Naive thymus-derived CD4-positive, alpha-beta T cell (primary cell): ENCODE measurements at regions of chr7 and their contacts with region 1.

Region 1: DNA sequence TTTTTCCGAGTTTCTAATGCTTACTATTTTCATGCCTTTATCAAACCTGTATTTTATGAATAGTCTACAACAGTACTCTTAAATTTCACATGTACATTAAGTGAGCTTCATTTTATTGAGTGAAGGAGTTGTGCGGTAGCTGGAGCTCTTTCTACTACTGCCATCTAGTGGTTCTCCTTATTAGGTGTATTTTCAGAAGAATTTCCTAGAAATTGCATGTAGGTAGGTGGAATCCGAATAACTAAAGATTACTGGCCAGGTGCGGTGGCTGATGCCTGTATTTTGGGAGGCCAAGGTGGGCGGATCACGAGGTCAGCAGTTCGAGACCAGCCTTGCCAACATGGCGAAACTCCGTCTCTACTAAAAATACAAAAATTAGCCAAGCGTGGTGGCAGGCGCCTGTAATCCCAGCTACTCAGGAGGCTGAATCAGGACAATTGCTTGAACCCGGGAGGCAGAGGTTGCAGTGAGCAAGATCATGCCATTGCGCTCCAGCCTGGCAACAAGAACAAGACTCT is 38.3 kb downstream of the LRRC72 start:
- DNase-seq: peak in 6 of 9 donors; percentile 24 to 59 (median 52)
- ATAC-seq: peak; percentile 73
- H3K4me3 ChIP-seq: no peak overlapping the region
- H3K4me3 Mint-ChIP-seq: peak overlapping the region in 8 of 10 donors; percentile 8 to 95 (median 48)
- H3K27ac ChIP-seq: no peak overlapping the region
- H3K27ac Mint-ChIP-seq: peak overlapping the region in 3 of 9 donors; percentile 17 to 93 (median 41)
- H3K4me1 ChIP-seq: peaks cover 0 to 5% of the 10 kb centered on the region in 2 donors
- H3K4me1 Mint-ChIP-seq: peaks cover 4 to 31% (median 23%) of the 10 kb centered on the region in 7 donors
- H3K27me3 ChIP-seq: no peaks in the 10 kb centered on the region
- H3K27me3 Mint-ChIP-seq: peaks cover 0 to 7% (median 4%) of the 10 kb centered on the region in 5 donors

Region 2: GRCh38 chr7:16078076-16078952 is 486.7 kb before region 1 on chr7:
- CTCF ChIA-PET with region 1: interaction called, 15 read pairs
- POLR2A ChIA-PET with region 1: no interaction called
- intact Hi-C with region 1: loop called (anchors 1 kb)
- DNase-seq: peak in 7 of 9 donors; percentile 4 to 29 (median 19)
- ATAC-seq: no peak
- H3K4me3 ChIP-seq: no peak overlapping the region
- H3K4me3 Mint-ChIP-seq: no peak overlapping the region
- H3K27ac ChIP-seq: no peak overlapping the region
- H3K27ac Mint-ChIP-seq: no peak overlapping the region
- H3K4me1 ChIP-seq: no peaks in the 10 kb centered on the region
- H3K4me1 Mint-ChIP-seq: peaks cover 0 to 10% (median 0%) of the 10 kb centered on the region in 7 donors
- H3K27me3 ChIP-seq: no peaks in the 10 kb centered on the region
- H3K27me3 Mint-ChIP-seq: no peaks in the 10 kb centered on the region

Region 3: DNA sequence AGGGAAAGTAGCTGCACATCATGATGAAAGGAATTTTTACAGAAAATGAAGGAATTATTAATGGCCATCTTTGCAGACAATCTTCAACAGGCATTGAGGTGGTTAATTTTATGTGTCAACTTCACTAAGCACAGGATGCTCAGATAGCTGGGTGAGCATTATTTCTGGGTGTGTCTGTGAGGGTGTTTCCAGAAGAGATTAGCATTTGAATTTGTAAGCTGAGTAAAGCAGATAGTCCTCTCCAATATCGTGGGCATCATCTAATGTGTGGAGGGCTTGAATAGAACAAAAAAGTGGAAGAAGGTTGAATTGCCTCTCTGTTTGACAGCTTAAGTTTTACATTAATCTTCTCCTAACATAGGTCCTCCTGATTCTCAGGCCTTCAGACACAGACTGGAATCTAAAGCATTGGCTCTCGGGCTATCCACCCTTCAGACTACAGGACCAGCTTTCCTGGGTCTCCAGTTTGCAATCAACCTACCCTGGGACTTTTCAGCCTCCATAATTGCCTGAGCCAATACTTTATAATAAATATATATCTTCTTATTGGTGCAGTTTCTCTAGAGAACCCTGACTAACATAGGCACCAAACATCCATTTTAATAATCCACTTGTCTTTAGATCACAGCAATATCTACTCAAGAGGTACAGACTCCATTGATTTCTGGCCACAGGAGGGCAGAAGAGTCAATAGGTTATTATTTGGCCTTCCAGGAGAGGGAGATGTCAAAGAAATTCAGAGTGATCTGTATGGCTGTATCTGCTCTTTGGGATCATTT is 133.1 kb before region 1 on chr7:
- CTCF ChIA-PET with region 1: interaction called, 28 read pairs
- POLR2A ChIA-PET with region 1: no interaction called
- intact Hi-C with region 1: loop called (anchors 1 kb)
- DNase-seq: peak in 7 of 9 donors; percentile 20 to 50 (median 31)
- ATAC-seq: peak; percentile 81
- H3K4me3 ChIP-seq: no peak overlapping the region
- H3K4me3 Mint-ChIP-seq: no peak overlapping the region
- H3K27ac ChIP-seq: no peak overlapping the region
- H3K27ac Mint-ChIP-seq: no peak overlapping the region
- H3K4me1 ChIP-seq: no peaks in the 10 kb centered on the region
- H3K4me1 Mint-ChIP-seq: peaks cover 0 to 6% (median 0%) of the 10 kb centered on the region in 7 donors
- H3K27me3 ChIP-seq: no peaks in the 10 kb centered on the region
- H3K27me3 Mint-ChIP-seq: peaks cover 0 to 16% (median 3%) of the 10 kb centered on the region in 5 donors